Activated naive CD8-positive, alpha-beta T cell treated with anti-CD3 and anti-CD28 coated beads, Interleukin-2, amount 10 ng/mL, durations not matched to agents 7 days and 5 days (primary cell): ENCODE measurements at regions of chr2 and their contacts with region 1.

Region 1: GRCh38 chr2:196171248-196171871 is at the start of gene STK17B:
- DNase-seq: peak; percentile 97
- ATAC-seq: peak; percentile 62
- H3K4me3 Mint-ChIP-seq: peak within 1 kb of the TSS; percentile 98
- H3K27ac Mint-ChIP-seq: peak within 1 kb of the TSS; percentile 99
- H3K4me1 Mint-ChIP-seq: peaks cover 32% of the 10 kb centered on the region
- H3K27me3 Mint-ChIP-seq: no peaks in the 10 kb centered on the region
- total RNA-seq, gene STK17B: 476 to 483 TPM

Region 2: DNA sequence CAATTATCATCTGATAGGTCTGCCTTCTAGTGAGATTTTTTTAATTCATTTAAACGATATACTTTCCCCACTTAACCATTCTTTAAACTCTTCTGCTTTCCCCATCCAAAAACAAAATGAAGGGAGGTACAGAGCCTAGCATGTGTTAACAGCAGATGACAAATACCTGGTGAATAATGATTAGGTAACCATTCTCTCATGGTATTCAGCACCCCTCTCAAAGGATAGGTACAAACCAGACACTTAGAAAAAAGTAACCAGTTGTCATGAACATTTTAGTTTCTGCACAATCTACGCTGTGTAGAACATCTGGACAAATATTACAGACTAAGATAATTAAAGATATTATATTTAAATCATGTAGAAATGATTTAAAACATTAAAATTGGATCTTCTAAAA is 159.0 kb before region 1 on chr2:
- POLR2A ChIA-PET with region 1: no interaction called
- DNase-seq: no peak
- ATAC-seq: no peak
- H3K4me3 Mint-ChIP-seq: no peak overlapping the region
- H3K27ac Mint-ChIP-seq: no peak overlapping the region
- H3K4me1 Mint-ChIP-seq: no peaks in the 10 kb centered on the region
- H3K27me3 Mint-ChIP-seq: peaks cover 9% of the 10 kb centered on the region

Region 3: GRCh38 chr2:196113061-196113974 is 58.0 kb before region 1 on chr2:
- POLR2A ChIA-PET with region 1: no interaction called
- DNase-seq: no peak
- ATAC-seq: no peak
- H3K4me3 Mint-ChIP-seq: no peak overlapping the region
- H3K27ac Mint-ChIP-seq: no peak overlapping the region
- H3K4me1 Mint-ChIP-seq: peaks cover 7% of the 10 kb centered on the region
- H3K27me3 Mint-ChIP-seq: no peaks in the 10 kb centered on the region

Region 4: GRCh38 chr2:196143730-196144131 is 27.6 kb before region 1 on chr2:
- POLR2A ChIA-PET with region 1: interaction called, 154 read pairs
- DNase-seq: no peak
- ATAC-seq: no peak
- H3K4me3 Mint-ChIP-seq: peak overlapping the region; percentile 64
- H3K27ac Mint-ChIP-seq: peak overlapping the region; percentile 77
- H3K4me1 Mint-ChIP-seq: peaks cover 72% of the 10 kb centered on the region
- H3K27me3 Mint-ChIP-seq: no peaks in the 10 kb centered on the region

Region 5: DNA sequence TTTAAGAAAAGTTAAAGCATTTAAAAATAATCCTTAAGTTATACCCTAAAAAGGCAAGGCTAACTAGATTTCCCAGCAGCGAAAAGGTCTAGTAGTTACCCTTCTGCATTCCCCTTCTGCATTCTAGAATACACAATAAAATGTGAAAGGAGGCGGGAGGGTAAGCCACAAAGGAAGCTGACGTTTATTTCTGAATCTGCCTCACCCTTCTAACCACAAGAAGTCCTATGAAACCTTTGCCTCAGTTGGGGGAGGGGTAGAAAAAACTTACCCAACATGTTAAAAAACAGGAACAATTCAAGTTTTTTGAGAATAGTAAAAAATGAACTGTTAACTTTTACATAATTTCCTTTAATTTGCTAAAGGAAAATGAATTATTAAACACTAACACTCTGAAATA is 11.3 kb before region 1 on chr2:
- POLR2A ChIA-PET with region 1: interaction called, 339 read pairs
- DNase-seq: no peak
- ATAC-seq: peak; percentile 20
- H3K4me3 Mint-ChIP-seq: peak overlapping the region; percentile 89
- H3K27ac Mint-ChIP-seq: peak overlapping the region; percentile 92
- H3K4me1 Mint-ChIP-seq: peaks cover 60% of the 10 kb centered on the region
- H3K27me3 Mint-ChIP-seq: no peaks in the 10 kb centered on the region

Region 6: GRCh38 chr2:196205881-196206435 is 34.6 kb after region 1 on chr2:
- POLR2A ChIA-PET with region 1: interaction called, 84 read pairs
- DNase-seq: no peak
- ATAC-seq: no peak
- H3K4me3 Mint-ChIP-seq: no peak overlapping the region
- H3K27ac Mint-ChIP-seq: no peak overlapping the region
- H3K4me1 Mint-ChIP-seq: peaks cover 30% of the 10 kb centered on the region
- H3K27me3 Mint-ChIP-seq: no peaks in the 10 kb centered on the region

Region 7: GRCh38 chr2:196233021-196233804 is 61.9 kb after region 1 on chr2:
- POLR2A ChIA-PET with region 1: interaction called, 169 read pairs
- DNase-seq: no peak
- ATAC-seq: no peak
- H3K4me3 Mint-ChIP-seq: peak overlapping the region; percentile 55
- H3K27ac Mint-ChIP-seq: peak overlapping the region; percentile 88
- H3K4me1 Mint-ChIP-seq: peaks cover 82% of the 10 kb centered on the region
- H3K27me3 Mint-ChIP-seq: no peaks in the 10 kb centered on the region

Region 8: DNA sequence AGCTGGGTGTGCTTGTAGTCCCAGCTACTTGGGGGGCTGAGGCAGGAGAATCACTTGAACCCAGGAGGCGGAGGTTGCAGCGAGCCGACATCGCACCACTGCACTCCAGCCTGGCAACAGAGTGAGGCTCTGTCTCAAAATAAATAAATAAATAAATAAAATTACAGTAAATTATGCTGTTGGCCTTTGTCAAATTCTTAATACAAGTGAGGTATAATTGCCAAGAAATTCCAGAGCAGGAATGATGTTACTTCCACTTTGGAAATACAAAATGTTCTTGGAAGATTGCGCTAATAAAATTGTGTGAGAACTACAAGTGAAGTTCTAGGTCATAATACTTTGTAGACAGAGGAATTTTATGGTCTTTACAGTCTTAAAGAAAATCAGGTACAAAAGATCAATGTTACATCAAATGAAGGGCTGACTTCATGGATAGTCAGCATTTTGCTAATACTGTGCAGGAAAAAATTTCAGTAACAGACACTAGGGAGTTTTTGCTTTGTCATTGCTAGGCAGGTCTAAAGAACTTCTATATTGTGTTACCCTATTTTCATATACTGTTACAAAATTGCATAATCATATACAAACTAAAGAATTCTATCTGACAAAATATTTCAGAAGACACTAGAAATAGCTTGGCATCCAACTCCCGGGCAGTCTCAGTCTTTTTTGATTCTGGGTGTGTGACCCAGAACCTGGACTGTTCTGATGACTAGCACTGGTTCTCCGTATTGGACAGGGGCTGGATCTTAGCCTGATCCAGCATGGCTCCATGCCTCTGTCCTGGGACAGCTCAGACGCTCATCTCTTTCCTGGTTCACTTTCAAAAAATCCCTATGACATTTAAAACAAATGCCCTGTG is 76.0 kb after region 1 on chr2:
- POLR2A ChIA-PET with region 1: interaction called, 116 read pairs
- DNase-seq: no peak
- ATAC-seq: no peak
- H3K4me3 Mint-ChIP-seq: no peak overlapping the region
- H3K27ac Mint-ChIP-seq: no peak overlapping the region
- H3K4me1 Mint-ChIP-seq: peaks cover 59% of the 10 kb centered on the region
- H3K27me3 Mint-ChIP-seq: no peaks in the 10 kb centered on the region

Region 9: DNA sequence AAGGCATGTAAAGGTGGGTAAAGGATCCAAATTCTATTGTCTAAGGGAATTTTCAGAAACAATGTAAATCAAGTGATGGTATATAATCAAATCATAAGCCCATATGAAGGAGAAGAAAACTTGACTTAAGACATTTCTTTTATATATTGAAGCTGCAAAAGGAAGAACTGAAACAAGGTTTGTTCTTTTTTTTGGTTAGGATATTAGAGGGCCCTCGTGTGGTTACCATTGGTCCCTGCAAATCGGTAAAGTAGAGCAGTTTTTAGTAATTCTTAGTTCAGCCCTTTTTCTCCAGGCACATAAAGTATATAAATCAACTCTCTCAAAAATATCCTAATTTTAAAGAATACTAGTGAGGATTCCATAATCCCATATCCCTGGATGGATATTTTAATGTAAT is 105.6 kb after region 1 on chr2:
- POLR2A ChIA-PET with region 1: interaction called, 76 read pairs
- DNase-seq: no peak
- ATAC-seq: peak; percentile 28
- H3K4me3 Mint-ChIP-seq: peak overlapping the region; percentile 82
- H3K27ac Mint-ChIP-seq: peak overlapping the region; percentile 52
- H3K4me1 Mint-ChIP-seq: peaks cover 43% of the 10 kb centered on the region
- H3K27me3 Mint-ChIP-seq: no peaks in the 10 kb centered on the region